ENCODE measurements at regions of chrX and their contacts with region 1.

Region 1: DNA sequence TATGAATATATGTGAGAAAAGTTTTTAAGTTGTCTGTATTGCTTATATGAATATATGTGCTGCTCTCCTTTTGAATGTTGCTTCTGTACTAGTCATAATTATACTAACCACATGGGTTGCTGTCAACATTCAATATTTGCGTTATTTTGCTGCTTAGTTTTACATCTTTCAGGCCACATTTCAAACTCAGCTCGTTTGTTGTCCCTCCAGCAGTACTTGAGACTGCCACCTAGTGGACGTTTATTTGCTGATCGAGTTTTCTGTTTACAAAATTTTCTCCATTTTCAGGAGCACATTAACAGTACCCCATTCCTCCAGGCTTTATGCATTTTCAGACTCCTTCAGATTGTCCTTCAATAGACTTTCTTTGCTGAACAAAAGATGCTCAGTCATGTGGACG is 75.8 kb downstream of the NUDT11 start:
- DNase-seq: no peak
- H3K4me3 ChIP-seq: no peak overlapping the region
- H3K27ac ChIP-seq: no peak overlapping the region
- H3K4me1 ChIP-seq: peaks cover 0 to 3% (median 0%) of the 10 kb centered on the region in 4 experiments; a peak in 2 of 7 replicates
- H3K27me3 ChIP-seq: no peaks in the 10 kb centered on the region
- CTCF ChIP-seq: peak in 2 of 3 experiments; percentile 37 to 56; a peak in 2 of 4 replicates
- EP300 ChIP-seq: no peak
- POLR2A ChIP-seq: no peak
- RAD21 ChIP-seq: peak; percentile 49 to 59

Region 2: GRCh38 chrX:51257490-51257889 is 163.1 kb before region 1 on chrX:
- CTCF ChIA-PET with region 1: no interaction called
- POLR2A ChIA-PET with region 1: no interaction called
- DNase-seq: no peak
- H3K4me3 ChIP-seq: no peak overlapping the region
- H3K27ac ChIP-seq: no peak overlapping the region
- H3K4me1 ChIP-seq: no peaks in the 10 kb centered on the region
- H3K27me3 ChIP-seq: no peaks in the 10 kb centered on the region
- CTCF ChIP-seq: no peak
- EP300 ChIP-seq: no peak
- POLR2A ChIP-seq: no peak
- RAD21 ChIP-seq: no peak

Region 3: DNA sequence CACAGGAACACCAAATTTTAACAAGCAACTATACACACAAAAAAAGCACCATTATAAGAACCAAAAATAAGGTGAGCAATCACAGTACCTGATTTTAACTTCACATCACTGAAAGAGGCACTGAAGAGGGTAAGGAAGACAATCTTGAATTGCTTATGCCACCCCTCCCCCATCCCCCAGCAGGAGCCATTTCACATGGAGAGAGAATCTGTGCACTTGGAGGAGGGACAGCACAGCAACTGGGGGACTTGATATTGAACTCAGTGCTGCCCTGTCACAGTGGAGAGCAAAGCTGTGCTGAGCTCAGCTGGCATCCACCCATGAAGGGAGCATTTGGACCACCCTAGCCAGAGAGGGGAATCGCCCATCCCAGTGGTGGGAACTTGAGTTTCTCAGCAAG is 19.8 kb after region 1 on chrX:
- CTCF ChIA-PET with region 1: interaction called, 16 read pairs
- POLR2A ChIA-PET with region 1: no interaction called
- DNase-seq: no peak
- H3K4me3 ChIP-seq: peak overlapping the region in 2 of 4 experiments; percentile 6 to 32; a peak in 1 of 8 replicates
- H3K27ac ChIP-seq: no peak overlapping the region
- H3K4me1 ChIP-seq: peaks cover 0 to 2% (median 0%) of the 10 kb centered on the region in 4 experiments; a peak in 4 of 7 replicates
- H3K27me3 ChIP-seq: no peaks in the 10 kb centered on the region
- CTCF ChIP-seq: no peak
- EP300 ChIP-seq: no peak
- POLR2A ChIP-seq: no peak
- RAD21 ChIP-seq: no peak